ENCODE measurements at regions of chr17 and their contacts with region 1.

Region 1: GRCh38 chr17:28726226-28727130 is at the start of gene TLCD1:
- DNase-seq: peak; percentile 93
- H3K4me3 Mint-ChIP-seq: peak within 1 kb of the TSS; percentile 90
- H3K27ac Mint-ChIP-seq: peak within 1 kb of the TSS; percentile 99
- H3K4me1 Mint-ChIP-seq: peaks cover 67% of the 10 kb centered on the region
- H3K27me3 Mint-ChIP-seq: no peaks in the 10 kb centered on the region
- total RNA-seq, gene TLCD1: 2.1 to 2.3 TPM

Region 2: GRCh38 chr17:27692766-27693165 is 1033.7 kb before region 1 on chr17:
- CTCF ChIA-PET with region 1: no interaction called
- POLR2A ChIA-PET with region 1: no interaction called
- DNase-seq: no peak
- H3K4me3 Mint-ChIP-seq: no peak overlapping the region
- H3K27ac Mint-ChIP-seq: no peak overlapping the region
- H3K4me1 Mint-ChIP-seq: no peaks in the 10 kb centered on the region
- H3K27me3 Mint-ChIP-seq: no peaks in the 10 kb centered on the region

Region 3: DNA sequence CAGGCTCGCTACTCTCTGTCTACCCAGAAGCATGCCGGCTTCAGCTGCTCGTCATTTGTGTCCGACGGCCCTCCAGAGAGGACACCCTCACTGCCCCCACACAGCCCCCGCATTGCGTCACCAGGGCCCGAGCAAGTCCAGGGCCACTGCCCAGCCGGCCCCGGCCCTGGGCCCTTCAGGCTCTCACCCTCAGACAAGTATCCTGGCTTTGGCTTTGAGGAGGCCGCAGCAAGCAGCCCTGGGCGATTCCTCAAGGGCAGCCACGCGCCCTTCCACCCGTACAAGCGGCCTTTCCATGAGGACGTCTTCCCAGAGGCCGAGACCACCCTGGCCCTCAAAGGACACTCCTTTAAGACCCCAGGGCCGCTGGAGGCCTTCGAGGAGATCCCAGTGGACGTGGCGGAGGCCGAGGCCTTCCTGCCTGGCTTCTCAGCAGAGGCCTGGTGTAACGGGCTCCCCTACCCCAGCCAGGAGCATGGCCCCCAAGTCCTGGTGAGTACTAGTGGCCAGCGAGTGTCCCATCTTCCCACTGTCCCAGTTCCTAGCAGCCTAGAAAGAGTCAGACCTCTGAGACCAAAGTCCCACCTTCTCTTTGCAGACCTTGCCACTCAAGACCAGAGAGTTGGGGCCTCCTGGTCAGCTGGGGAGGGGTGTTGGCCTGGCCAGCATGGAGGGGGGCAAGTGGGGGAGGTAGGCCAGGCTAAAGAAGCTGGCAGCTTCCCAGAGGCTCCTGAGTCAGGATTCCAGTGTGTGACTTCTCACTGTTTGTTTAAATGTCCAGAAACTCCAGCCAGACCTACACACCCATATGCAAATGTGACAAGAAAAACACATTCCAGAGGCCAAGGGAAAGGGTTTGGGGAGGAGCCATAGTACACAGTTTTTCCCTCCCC is 201.8 kb before region 1 on chr17:
- CTCF ChIA-PET with region 1: no interaction called
- POLR2A ChIA-PET with region 1: no interaction called
- DNase-seq: no peak
- H3K4me3 Mint-ChIP-seq: no peak overlapping the region
- H3K27ac Mint-ChIP-seq: no peak overlapping the region
- H3K4me1 Mint-ChIP-seq: no peaks in the 10 kb centered on the region
- H3K27me3 Mint-ChIP-seq: no peaks in the 10 kb centered on the region

Region 4: DNA sequence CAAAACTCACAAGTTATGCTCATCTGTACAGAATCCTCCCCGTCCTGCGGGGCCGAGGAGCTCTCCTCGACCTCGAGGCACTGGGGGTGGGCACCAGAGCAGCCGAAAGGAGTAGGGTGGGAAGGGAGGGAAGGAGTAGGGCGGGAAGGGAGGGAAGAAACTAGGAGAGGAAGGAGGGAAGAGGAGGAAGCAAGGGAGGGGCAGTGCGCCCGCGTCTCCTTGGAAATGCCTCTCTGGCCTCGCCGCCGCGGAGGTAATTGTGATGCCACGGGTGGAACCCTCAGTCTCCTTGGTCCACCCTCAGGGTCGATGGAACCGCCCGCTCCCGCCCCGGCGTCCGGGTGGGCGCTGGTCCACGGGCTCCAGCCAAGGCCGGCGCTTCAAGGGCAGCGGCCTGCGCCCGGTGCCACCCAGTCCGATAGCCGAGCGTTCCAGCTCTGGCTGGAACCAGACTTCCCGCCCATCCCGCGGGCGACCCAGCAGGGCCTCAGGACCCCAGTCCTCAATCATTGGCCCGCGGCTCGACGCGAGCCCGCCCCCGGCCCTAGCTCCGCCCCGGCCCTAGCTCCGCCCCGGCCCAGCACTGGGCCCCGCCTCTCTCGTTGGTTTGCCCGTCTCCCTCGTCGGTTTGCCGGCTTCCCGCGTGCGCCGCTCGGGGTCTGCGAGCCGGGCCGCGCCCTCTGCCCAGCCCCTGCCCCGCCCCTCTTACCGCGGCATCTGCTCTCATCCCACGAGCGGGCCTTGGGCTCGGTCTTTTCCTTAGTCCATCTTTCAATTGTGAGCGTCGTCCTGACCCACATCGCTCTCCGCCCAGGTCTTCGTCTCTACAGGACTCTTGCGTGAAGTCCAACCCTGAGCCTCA is 15.4 kb before region 1 on chr17:
- CTCF ChIA-PET with region 1: interaction called, 69 read pairs
- POLR2A ChIA-PET with region 1: no interaction called
- DNase-seq: peak; percentile 88
- H3K4me3 Mint-ChIP-seq: peak overlapping the region; percentile 74
- H3K27ac Mint-ChIP-seq: peak overlapping the region; percentile 94
- H3K4me1 Mint-ChIP-seq: peaks cover 21% of the 10 kb centered on the region
- H3K27me3 Mint-ChIP-seq: peaks cover 13% of the 10 kb centered on the region

Region 5: GRCh38 chr17:28773736-28774135 is 47.3 kb after region 1 on chr17:
- CTCF ChIA-PET with region 1: interaction called, 15 read pairs
- POLR2A ChIA-PET with region 1: no interaction called
- DNase-seq: no peak
- H3K4me3 Mint-ChIP-seq: no peak overlapping the region
- H3K27ac Mint-ChIP-seq: no peak overlapping the region
- H3K4me1 Mint-ChIP-seq: peaks cover 20% of the 10 kb centered on the region
- H3K27me3 Mint-ChIP-seq: no peaks in the 10 kb centered on the region

Region 6: GRCh38 chr17:28916302-28916934 is 189.9 kb after region 1 on chr17:
- CTCF ChIA-PET with region 1: interaction called, 18 read pairs
- POLR2A ChIA-PET with region 1: no interaction called
- DNase-seq: peak; percentile 49
- H3K4me3 Mint-ChIP-seq: no peak overlapping the region
- H3K27ac Mint-ChIP-seq: no peak overlapping the region
- H3K4me1 Mint-ChIP-seq: peaks cover 5% of the 10 kb centered on the region
- H3K27me3 Mint-ChIP-seq: no peaks in the 10 kb centered on the region

Region 7: DNA sequence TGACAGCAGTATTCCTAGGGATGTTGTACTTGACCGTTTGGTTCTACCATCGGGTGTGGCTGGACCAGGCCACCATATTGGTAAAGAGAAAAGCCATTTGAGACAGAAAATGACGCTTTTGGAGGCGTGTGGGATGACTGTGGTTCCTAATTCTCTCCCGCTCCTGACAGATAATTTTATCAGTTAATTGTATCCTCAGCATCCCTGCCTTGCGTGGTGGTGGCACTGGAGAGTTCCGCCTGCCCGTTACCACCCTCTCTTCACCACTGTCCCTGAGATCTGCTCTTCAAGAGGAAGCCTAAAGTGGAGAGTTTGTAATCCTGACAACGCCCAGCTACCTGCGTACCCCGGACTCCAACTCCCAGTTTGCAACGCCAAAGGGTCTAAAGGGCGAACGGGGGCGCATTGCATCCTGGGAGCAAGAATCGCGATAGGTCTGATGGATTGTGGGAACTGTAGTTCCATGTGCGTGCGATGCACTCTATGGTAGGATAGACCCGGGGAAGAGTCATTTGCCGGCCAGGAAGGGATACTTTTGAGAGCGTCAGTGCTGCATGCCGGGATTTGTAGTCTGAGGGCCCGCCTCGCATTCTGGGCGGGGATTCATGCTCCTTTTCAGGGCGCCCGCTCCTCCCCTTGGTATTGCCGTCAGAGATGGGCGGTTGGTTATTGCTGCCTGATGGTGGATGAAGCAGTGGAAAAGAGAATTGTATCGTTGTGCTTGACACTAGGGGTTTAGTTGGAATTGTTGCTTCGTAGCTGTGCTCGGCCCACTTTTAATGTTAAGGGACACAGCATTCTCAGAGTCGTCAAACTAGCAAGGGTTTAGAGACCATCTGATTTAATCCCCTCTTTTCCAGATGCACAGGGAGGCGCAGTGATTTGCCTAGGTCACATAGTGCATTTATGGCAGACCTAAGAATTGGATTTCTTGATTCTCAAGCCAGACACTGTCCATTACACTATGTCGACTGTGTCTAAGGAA is 225.8 kb after region 1 on chr17:
- CTCF ChIA-PET with region 1: interaction called, 41 read pairs
- POLR2A ChIA-PET with region 1: interaction called, 3 read pairs
- DNase-seq: peak; percentile 98
- H3K4me3 Mint-ChIP-seq: no peak overlapping the region
- H3K27ac Mint-ChIP-seq: no peak overlapping the region
- H3K4me1 Mint-ChIP-seq: peaks cover 15% of the 10 kb centered on the region
- H3K27me3 Mint-ChIP-seq: no peaks in the 10 kb centered on the region